Cardiac septum (tissue), 1 donor: ENCODE measurements at regions of chr2 and their contacts with region 1.

Region 1: DNA sequence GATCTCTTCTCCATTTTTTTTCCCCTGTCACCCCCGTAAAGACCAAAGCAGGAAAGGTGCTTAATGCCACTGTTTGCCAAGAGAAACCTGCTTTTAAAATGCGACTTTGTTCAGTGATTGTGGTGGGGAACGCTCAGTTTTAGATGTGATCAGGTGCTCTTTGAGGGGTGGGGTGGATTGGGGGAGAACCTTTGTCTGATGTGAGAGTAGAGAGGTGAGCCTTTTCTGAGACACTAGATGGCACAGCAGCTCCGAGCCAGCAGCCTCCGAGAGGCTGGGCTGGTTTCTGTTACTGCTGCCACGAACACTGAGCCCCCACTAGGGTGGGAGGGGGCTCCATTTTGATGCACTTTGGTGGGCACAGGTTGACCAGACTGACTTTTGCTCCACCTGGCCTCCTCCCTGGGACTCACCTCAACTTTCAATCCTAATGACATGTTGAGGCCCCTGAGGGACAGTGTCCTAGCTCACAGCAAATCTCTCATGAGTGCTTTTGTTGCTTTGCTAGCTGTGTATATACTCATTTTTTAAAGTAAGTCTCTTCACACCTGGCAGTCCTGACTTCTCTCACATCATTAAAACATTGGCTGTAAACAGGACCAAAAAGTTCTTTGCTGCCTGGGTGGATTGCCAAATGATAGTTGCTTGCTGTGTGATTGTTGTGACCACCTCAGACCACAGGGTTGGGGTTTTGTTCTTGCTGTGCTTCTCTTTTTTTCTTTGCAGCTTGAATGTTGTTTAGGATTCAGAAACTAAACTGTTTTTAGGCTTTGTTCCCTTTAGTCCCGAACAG is 98.2 kb upstream of the MAP3K20 start:
- DNase-seq: no peak

Region 2: GRCh38 chr2:172931918-172932520 is 45.4 kb before region 1 on chr2:
- intact Hi-C with region 1: no loop called
- DNase-seq: no peak

Region 3: GRCh38 chr2:172995323-172996244 is 18.1 kb after region 1 on chr2:
- intact Hi-C with region 1: no loop called
- DNase-seq: no peak

Region 4: GRCh38 chr2:173021939-173022371 is 44.5 kb after region 1 on chr2:
- intact Hi-C with region 1: loop called (anchors 5 kb)
- DNase-seq: peak; percentile 79

Region 5: GRCh38 chr2:173448938-173449471 is 471.5 kb after region 1 on chr2:
- intact Hi-C with region 1: loop called (anchors 5 kb)
- DNase-seq: peak; percentile 88